ENCODE measurements at regions of chr13 and their contacts with region 1.

Region 1: DNA sequence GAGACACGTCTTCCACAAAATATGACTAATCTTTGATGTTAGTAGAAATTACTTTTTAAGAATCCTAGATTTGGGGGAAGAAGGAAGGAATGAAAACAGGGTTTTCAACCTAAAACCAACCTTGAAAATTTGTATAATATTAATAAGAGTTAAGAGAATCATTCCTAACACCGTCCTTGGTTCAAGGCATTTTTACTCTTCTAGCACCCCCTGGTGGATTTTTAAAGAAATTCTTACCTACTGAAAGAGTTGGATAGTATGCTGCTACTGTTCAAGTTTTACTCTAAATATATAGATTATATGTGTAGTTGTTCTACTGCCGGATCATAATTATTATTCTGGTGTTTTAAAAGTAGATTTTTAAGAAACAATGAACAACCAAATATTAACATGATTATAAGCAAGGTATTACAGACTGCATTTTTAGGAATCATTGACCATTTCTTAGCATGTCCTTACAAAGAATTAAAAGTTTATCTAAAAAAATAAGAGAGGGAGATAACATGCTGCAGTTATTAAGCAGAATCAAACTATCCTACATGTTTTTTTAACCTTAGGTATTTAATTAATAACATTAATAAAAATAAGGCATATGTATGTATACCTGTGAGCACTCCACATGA is 7.4 kb upstream of the SLITRK6 start:
- DNase-seq: no peak
- ATAC-seq: peak; percentile 87
- H3K4me3 ChIP-seq: no peak overlapping the region
- H3K27ac ChIP-seq: no peak overlapping the region
- H3K4me1 ChIP-seq: no peaks in the 10 kb centered on the region
- H3K27me3 ChIP-seq: no peaks in the 10 kb centered on the region
- CTCF ChIP-seq: peak; percentile 26 to 52 (median 36); a peak in 3 of 6 replicates
- EP300 ChIP-seq: no peak
- POLR2A ChIP-seq: no peak
- RAD21 ChIP-seq: peak; percentile 71

Region 2: DNA sequence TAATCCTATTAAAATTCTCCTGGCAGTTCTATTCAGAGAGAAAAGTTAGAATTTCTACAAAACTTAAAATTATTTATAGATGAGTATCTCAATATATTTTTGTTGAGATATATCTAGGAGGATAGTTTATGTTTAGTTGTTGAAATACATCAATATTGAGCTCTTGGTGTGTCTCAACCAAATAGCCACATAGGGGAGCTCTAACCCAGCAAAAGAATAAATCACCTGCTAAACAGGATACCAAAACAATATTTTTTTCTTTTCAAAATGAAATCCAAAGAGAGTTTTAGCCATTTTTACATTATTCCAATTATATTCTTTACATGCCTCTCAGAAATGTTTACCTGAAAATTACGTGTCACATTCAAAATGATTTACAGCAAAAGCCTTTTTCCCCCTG is 962.2 kb before region 1 on chr13:
- CTCF ChIA-PET with region 1: interaction called, 3 read pairs
- POLR2A ChIA-PET with region 1: no interaction called
- RAD21 ChIA-PET with region 1: no interaction called
- SMC1A ChIA-PET with region 1: no interaction called
- in situ Hi-C with region 1: no loop called
- intact Hi-C with region 1: loop called (anchors 5 kb)
- DNase-seq: no peak
- ATAC-seq: peak; percentile 72
- H3K4me3 ChIP-seq: no peak overlapping the region
- H3K27ac ChIP-seq: no peak overlapping the region
- H3K4me1 ChIP-seq: no peaks in the 10 kb centered on the region
- H3K27me3 ChIP-seq: no peaks in the 10 kb centered on the region
- CTCF ChIP-seq: peak in 2 of 3 experiments; percentile 13 to 35; a peak in 2 of 6 replicates
- EP300 ChIP-seq: no peak
- POLR2A ChIP-seq: no peak
- RAD21 ChIP-seq: peak; percentile 21; the same call in 1 of the 2 replicates

Region 3: DNA sequence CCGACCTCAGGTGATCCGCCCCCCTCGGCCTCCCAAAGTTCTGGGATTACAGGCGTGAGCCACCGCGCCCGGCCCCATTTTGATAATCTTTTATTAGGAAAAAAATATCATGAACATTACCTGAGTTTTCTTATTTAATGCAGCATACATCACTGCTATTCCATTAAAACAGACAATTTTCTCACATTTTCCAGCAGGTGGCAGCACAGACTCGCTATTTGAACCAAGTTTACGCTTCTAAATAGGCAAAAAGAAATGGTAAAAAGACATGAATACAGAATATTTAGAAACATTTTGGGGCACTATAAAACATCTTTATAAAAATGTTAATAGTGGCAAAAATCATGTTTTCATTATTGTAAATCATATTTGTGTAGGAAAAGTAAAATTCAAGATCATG is 910.5 kb before region 1 on chr13:
- CTCF ChIA-PET with region 1: interaction called, 6 read pairs
- POLR2A ChIA-PET with region 1: no interaction called
- RAD21 ChIA-PET with region 1: interaction called, 5 read pairs
- SMC1A ChIA-PET with region 1: interaction called, 4 read pairs
- in situ Hi-C with region 1: loop called (anchors 5 kb)
- intact Hi-C with region 1: loop called (anchors 1 kb)
- DNase-seq: peak; percentile 1
- ATAC-seq: peak; percentile 70
- H3K4me3 ChIP-seq: no peak overlapping the region
- H3K27ac ChIP-seq: no peak overlapping the region
- H3K4me1 ChIP-seq: no peaks in the 10 kb centered on the region
- H3K27me3 ChIP-seq: no peaks in the 10 kb centered on the region
- CTCF ChIP-seq: peak; percentile 43 to 71 (median 63)
- EP300 ChIP-seq: no peak
- POLR2A ChIP-seq: no peak
- RAD21 ChIP-seq: peak; percentile 80

Region 4: DNA sequence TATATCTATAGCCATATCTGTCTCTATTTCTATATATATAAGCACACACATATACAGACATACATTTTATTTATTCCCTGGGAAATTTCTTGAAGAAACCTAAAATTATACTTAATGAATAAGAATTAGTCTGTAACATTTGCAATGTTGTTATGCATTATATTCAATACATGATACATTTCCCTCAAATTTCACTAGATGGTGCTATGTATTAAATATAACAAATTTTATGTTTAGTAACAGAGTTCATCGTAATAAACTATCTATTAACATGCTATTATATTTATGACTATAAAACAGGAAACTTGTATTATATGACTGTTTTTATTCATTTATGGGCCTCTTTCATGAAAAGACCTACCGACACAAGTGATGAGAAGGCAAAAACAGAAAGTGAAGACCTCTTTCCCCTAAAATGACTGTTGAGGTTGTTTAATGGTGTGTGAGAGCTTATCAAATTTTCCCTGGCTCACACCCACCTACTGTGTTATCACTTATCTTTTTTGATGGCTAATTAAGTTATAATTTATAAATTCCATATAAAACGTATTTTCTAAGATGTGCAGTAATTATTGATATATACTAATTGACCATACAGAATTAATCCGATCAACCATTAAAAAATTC is 889.3 kb before region 1 on chr13:
- CTCF ChIA-PET with region 1: interaction called, 3 read pairs
- POLR2A ChIA-PET with region 1: no interaction called
- RAD21 ChIA-PET with region 1: no interaction called
- SMC1A ChIA-PET with region 1: interaction called, 3 read pairs
- in situ Hi-C with region 1: no loop called
- intact Hi-C with region 1: loop called (anchors 2 kb)
- DNase-seq: no peak
- ATAC-seq: peak; percentile 55; the same call in 2 of the 3 replicates
- H3K4me3 ChIP-seq: no peak overlapping the region
- H3K27ac ChIP-seq: no peak overlapping the region
- H3K4me1 ChIP-seq: no peaks in the 10 kb centered on the region
- H3K27me3 ChIP-seq: no peaks in the 10 kb centered on the region
- CTCF ChIP-seq: peak in 1 of 3 experiments; percentile 12; a peak in 2 of 6 replicates
- EP300 ChIP-seq: no peak
- POLR2A ChIP-seq: no peak
- RAD21 ChIP-seq: no peak

Region 5: GRCh38 chr13:85709072-85709471 is 97.6 kb before region 1 on chr13:
- CTCF ChIA-PET with region 1: no interaction called
- POLR2A ChIA-PET with region 1: no interaction called
- RAD21 ChIA-PET with region 1: no interaction called
- SMC1A ChIA-PET with region 1: no interaction called
- in situ Hi-C with region 1: no loop called
- intact Hi-C with region 1: no loop called
- DNase-seq: no peak
- ATAC-seq: no peak
- H3K4me3 ChIP-seq: no peak overlapping the region
- H3K27ac ChIP-seq: no peak overlapping the region
- H3K4me1 ChIP-seq: no peaks in the 10 kb centered on the region
- H3K27me3 ChIP-seq: no peaks in the 10 kb centered on the region
- CTCF ChIP-seq: no peak
- EP300 ChIP-seq: no peak
- POLR2A ChIP-seq: no peak
- RAD21 ChIP-seq: no peak

Region 6: DNA sequence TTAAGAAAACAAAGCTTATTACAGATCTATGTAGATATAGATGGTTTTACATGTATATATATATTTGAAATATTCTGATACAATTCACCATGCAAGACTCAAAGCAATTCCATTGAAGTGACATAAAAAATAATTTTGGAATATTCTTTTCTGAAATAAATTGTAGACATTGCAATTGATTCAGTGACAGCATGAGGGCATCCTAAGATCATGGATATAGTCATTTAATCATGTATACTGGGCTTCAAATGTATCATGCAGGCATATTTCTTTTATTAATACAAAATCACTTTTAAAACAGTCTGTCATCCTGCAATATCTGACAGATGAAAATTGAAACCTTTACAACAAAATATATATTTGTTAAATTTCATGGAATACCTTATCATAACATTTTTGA is 279.2 kb after region 1 on chr13:
- CTCF ChIA-PET with region 1: no interaction called
- POLR2A ChIA-PET with region 1: no interaction called
- RAD21 ChIA-PET with region 1: no interaction called
- SMC1A ChIA-PET with region 1: no interaction called
- in situ Hi-C with region 1: no loop called
- intact Hi-C with region 1: no loop called
- DNase-seq: no peak
- ATAC-seq: no peak
- H3K4me3 ChIP-seq: no peak overlapping the region
- H3K27ac ChIP-seq: no peak overlapping the region
- H3K4me1 ChIP-seq: no peaks in the 10 kb centered on the region
- H3K27me3 ChIP-seq: no peaks in the 10 kb centered on the region
- CTCF ChIP-seq: no peak; a peak in 1 of 6 replicates
- EP300 ChIP-seq: no peak
- POLR2A ChIP-seq: no peak
- RAD21 ChIP-seq: no peak

Measured in GM12878 (cell line).